Cardiac septum (tissue), 1 donor: ENCODE measurements at regions of chr2 and their contacts with region 1.

Region 1: GRCh38 chr2:67650291-67651133 is 253.4 kb downstream of the ETAA1 start:
- DNase-seq: peak; percentile 90

Region 2: DNA sequence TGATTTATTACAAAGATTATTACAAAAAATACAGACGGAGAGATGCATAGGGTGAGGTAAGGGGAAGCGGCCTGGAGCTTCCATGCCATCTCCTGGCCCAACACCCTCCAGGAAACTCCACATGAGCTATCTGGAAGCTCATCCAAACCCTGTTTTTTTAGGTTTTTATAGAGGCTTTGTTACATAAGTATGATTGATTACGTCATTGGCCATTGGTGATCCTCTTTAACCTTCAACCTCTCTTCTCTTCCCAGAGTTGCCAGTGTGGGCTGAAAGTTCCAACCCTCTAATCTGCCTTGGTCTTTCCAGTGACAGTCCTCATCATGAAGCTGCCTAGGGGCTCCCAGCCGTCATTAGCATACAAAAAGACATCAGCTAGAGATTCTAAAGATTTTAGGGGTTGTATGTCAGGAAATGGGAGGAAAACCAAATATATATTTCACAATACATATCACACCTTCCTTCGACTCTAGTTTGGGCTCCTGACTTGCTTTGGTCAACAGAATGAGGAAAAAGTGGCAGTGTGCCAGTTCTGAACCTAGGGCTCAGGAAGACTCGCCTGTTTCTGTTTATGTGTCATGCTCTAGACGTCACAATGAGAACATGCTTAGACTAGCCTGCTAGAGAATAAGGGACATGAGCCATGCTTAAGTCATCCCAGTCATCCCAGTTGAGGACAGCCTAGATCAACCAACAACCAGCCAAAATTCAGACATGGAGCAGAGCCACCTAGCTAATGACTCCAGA is 199.3 kb before region 1 on chr2:
- intact Hi-C with region 1: loop called (anchors 2 kb)
- DNase-seq: no peak

Region 3: DNA sequence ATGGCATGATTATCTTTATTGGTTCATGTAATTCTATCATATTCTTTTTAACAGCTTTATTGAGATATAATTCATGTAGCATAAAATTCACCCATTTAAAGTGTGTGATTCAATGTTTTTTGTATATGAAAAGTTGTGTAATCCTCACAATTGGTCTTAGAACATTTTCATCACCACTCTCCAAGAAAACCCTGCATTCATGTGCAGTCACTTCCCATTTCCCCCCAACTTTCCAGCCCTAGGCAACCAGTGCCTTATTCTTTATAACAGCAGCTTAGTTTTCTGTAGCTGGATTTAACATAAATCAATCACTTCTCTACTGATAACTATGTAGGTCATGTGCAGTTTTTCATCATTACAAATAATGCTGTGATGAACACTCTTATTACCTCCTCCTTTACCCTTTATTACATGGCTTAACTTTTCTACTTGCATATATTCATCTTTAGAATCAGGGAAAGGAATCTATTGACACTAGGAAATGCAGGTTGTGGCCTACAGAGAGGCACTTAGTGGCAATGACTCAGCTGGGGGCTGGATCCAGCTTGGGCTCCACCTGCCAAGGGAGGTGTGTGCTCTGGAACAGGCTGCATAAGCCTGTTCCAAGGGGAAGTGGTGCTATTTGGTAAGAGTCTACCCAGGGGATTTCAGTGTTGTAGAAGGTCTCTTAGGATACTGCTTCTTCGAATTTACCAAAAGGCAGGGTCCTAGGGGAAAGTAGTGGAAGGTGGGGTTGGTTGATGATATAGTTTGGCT is 164.3 kb before region 1 on chr2:
- intact Hi-C with region 1: loop called (anchors 5 kb)
- DNase-seq: no peak

Region 4: GRCh38 chr2:67561457-67561965 is 89.0 kb before region 1 on chr2:
- intact Hi-C with region 1: loop called (anchors 5 kb)
- DNase-seq: peak; percentile 77

Region 5: DNA sequence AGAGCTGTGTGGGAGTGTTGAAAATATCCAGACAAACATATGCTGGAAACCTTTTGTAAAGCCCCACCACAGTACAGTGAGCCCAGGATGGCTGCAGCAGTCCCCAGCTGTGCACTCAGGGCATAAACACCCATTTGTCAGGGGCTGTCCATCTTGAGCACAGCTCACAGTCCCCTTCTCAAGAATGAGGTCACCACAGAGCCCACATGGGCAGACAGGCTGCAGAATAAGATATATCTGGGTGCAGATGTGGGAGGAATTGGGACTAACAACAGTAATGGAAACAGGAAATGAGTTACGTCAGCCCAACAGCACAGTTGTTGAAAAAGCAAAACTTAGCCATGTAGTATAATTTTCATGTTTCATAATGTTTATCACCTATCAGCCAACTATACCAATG is 33.8 kb before region 1 on chr2:
- intact Hi-C with region 1: no loop called
- DNase-seq: peak; percentile 74

Region 6: DNA sequence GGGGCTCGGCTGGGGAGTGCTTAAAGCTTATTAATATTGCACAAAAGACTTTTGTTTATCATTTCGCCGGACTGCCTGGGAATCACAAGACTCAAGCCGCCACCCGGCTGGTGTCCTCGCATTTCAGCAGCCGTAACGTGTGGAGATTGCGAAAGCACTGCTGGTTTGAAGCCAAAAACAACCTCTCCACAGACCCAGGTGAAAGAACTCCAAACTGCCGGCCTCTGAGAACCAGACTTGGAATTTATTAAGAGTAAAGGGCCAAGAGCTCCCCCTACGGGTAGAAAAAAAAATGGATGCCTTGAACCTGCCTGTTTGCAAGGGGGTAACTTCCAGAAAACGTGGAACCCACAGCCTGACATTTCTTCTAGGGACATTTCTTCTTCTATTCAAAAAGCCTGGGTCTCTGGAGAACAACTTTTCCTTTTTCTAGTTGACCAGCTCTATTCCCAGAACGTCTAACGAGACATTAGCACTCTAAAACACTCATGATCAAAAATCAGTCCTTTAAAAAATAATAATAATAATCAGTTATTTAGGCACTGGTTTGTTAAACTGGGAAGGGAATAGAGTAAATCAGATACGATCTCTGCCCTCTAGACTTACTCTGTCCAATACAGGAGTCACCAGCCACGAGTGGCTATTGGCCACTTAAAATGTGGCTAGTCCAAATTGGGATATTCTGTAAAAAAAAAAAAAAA is 196.0 kb after region 1 on chr2:
- intact Hi-C with region 1: loop called (anchors 5 kb)
- DNase-seq: peak; percentile 77